OCI-LY7 (cell line): ENCODE measurements at regions of chr19 and their contacts with region 1.

Region 1: GRCh38 chr19:16111160-16111908 is at the start of gene RAB8A:
- DNase-seq: peak; percentile 99
- H3K4me3 ChIP-seq: peak within 1 kb of the TSS; percentile 96
- H3K27ac ChIP-seq: peak within 1 kb of the TSS; percentile 63
- H3K4me1 ChIP-seq: peaks cover 50% of the 10 kb centered on the region
- CTCF ChIP-seq: peak; percentile 81
- total RNA-seq, gene RAB8A: 64.9 and 69.1 TPM in 2 replicates

Region 2: DNA sequence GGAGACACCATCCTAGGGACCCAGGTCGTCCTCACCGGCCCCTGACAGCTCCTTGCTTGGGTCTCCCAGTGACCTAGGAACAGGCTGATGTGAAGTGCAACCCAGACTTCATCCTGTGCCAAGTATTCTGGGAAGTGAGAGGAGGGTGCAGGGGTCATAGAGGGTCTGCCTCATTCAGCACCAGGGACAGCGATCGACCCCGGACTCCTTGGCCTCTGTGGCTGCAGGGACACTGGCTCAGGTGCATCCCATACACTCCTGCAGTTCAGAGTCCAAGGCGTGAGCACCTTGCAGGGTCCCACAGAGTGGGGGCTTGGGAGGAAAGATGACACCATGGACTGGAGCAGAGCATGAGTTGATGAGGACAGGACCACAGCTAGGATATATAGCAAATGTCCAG is 393.5 kb before region 1 on chr19:
- CTCF ChIA-PET with region 1: no interaction called
- POLR2A ChIA-PET with region 1: no interaction called
- intact Hi-C with region 1: no loop called
- DNase-seq: no peak
- H3K4me3 ChIP-seq: no peak overlapping the region
- H3K27ac ChIP-seq: no peak overlapping the region
- H3K4me1 ChIP-seq: no peaks in the 10 kb centered on the region
- CTCF ChIP-seq: no peak

Region 3: GRCh38 chr19:15836595-15837337 is 274.6 kb before region 1 on chr19:
- CTCF ChIA-PET with region 1: no interaction called
- POLR2A ChIA-PET with region 1: no interaction called
- intact Hi-C with region 1: loop called (anchors 2 kb)
- DNase-seq: peak; percentile 98
- H3K4me3 ChIP-seq: peak overlapping the region; percentile 82
- H3K27ac ChIP-seq: peak overlapping the region; percentile 89
- H3K4me1 ChIP-seq: peaks cover 18% of the 10 kb centered on the region
- CTCF ChIP-seq: no peak

Region 4: GRCh38 chr19:16076154-16076957 is 35.0 kb before region 1 on chr19 and contains the start of gene TPM4:
- CTCF ChIA-PET with region 1: no interaction called
- POLR2A ChIA-PET with region 1: interaction called, 3 read pairs
- intact Hi-C with region 1: loop called (anchors 1 kb)
- DNase-seq: peak; percentile 67
- H3K4me3 ChIP-seq: peak within 1 kb of the TSS; percentile 80
- H3K27ac ChIP-seq: peak within 1 kb of the TSS; percentile 96
- H3K4me1 ChIP-seq: peaks cover 56% of the 10 kb centered on the region
- CTCF ChIP-seq: no peak
- total RNA-seq, gene TPM4: 111 and 134 TPM in 2 replicates

Region 5: DNA sequence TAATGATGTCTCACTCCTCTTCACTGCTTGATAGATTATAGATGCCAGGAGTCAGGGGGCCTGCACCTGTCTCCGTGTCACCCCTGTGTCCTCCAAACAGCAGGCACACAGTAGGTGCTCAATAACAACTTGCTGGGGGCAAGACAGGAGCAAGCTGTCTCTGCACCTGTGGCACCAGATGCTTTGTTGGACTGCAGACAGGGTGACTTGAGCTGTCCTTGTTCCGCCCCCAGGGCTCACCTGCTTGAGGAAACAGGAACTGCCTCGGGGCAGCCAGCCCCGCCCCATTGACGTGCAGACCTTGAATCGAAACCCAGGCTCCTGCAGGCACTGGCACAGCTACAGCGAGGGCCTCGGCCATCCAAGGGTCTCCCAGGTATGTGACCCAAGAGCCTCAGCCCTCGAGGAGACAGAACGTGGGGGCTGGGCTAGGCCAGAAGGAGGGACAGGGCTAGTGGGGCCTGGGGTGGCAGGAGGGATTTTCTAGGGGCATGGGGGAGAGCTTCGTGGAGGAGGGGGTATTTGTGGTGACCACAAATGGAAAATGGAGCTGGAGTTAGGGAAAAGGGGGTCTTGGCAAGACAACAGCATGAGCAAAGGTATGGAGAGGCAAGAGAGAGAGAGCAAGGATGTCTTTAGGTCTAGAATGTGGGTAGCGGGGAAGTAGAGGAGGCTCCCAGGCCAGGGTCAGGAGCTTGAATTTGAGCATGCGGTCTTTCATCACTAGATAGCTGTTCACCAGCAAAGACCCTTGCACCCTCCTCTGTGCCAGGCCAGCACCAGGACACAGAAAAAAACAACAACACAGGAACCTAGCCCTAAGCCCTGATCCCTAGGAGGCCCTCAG is 32.3 kb after region 1 on chr19 and contains the start of gene HSH2D:
- CTCF ChIA-PET with region 1: no interaction called
- POLR2A ChIA-PET with region 1: interaction called, 5 read pairs
- intact Hi-C with region 1: loop called (anchors 2 kb)
- DNase-seq: peak; percentile 97
- H3K4me3 ChIP-seq: peak within 1 kb of the TSS; percentile 76
- H3K27ac ChIP-seq: peak within 1 kb of the TSS; percentile 81
- H3K4me1 ChIP-seq: peaks cover 70% of the 10 kb centered on the region
- CTCF ChIP-seq: no peak
- total RNA-seq, gene HSH2D: 52.4 and 57.6 TPM in 2 replicates